PC-3 (cell line): ENCODE measurements at regions of chr2 and their contacts with region 1.

Region 1: DNA sequence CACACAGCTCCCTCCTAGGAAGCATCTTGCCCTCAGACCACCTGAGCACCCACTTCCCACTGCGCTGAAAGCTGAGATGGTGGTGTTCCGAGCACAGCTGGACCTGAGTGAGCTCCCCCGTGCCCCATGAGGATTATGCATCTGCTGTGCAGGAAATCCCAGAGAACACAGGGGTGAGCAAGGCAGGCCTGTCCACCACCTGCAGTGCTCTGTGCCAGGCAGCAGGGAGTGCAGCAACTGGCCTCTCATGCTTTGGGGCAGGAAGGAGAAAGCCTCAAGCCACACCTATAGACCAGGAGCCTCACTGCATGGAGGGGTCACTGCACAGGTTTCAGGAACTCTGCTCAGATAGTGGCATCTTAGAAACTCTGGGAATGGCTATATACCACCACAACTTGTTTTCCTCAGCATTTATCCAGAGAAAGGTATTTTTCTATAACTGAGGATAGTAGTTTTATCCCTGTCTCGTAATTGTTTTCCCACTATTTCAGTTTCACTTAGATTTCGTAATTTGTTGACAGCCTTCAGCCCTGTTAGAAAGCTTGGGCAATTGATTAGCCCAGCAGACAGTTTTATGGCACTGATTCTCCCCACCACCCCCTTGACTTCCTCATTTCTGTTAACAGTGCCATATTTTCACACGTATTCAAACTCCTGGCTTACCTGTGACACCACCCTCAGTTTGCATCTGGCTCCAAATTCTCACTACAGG is 144.3 kb upstream of the DAPL1 start:
- DNase-seq: peak; percentile 18
- ATAC-seq: peak; percentile 45
- H3K4me3 ChIP-seq: no peak overlapping the region
- H3K27ac ChIP-seq: no peak overlapping the region
- H3K4me1 ChIP-seq: peaks cover 14% of the 10 kb centered on the region
- H3K27me3 ChIP-seq: no peaks in the 10 kb centered on the region
- CTCF ChIP-seq: peak; percentile 27; the same call in 1 of the 2 replicates

Region 2: GRCh38 chr2:158695305-158695704 is 44.5 kb after region 1 on chr2:
- CTCF ChIA-PET with region 1: no interaction called
- POLR2A ChIA-PET with region 1: interaction called, 23 read pairs
- intact Hi-C with region 1: no loop called
- DNase-seq: no peak
- ATAC-seq: no peak
- H3K4me3 ChIP-seq: no peak overlapping the region
- H3K27ac ChIP-seq: no peak overlapping the region
- H3K4me1 ChIP-seq: peaks cover 4% of the 10 kb centered on the region; the same call in 1 of the 2 replicates
- H3K27me3 ChIP-seq: no peaks in the 10 kb centered on the region
- CTCF ChIP-seq: no peak